Activated B cell treated with CpG ODN at 0.5 μM for 24 hours (primary cell): ENCODE measurements at regions of chr12 and their contacts with region 1.

Region 1: DNA sequence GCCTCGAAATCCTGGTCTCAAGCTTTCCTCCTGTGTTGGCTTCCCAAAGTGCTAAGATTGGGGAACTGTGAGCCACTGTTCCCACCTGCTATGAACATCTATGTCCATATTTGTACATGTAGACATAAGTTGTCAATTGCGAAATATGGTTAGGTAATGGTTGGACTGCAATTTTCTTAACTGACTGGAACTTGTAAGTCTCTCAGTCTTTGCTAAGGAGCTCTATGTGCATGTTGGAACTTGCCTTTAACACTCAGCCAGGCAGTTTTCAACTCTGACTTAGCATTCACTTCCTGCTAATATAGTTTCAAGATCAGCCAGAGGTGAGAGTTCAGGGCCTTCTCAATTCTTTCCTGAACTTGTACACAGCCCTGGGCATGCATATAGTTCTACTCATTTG is 44.5 kb upstream of the EEA1 start:
- DNase-seq: no peak
- ATAC-seq: no peak
- H3K4me3 Mint-ChIP-seq: no peak overlapping the region
- H3K27ac Mint-ChIP-seq: peak overlapping the region; percentile 62
- H3K4me1 Mint-ChIP-seq: peaks cover 58% of the 10 kb centered on the region
- H3K27me3 Mint-ChIP-seq: no peaks in the 10 kb centered on the region
- CTCF ChIP-seq: no peak

Region 2: GRCh38 chr12:91588874-91589454 is 1384.6 kb before region 1 on chr12:
- CTCF ChIA-PET with region 1: no interaction called
- POLR2A ChIA-PET with region 1: no interaction called
- intact Hi-C with region 1: no loop called
- DNase-seq: no peak
- ATAC-seq: no peak
- H3K4me3 Mint-ChIP-seq: no peak overlapping the region
- H3K27ac Mint-ChIP-seq: no peak overlapping the region
- H3K4me1 Mint-ChIP-seq: no peaks in the 10 kb centered on the region
- H3K27me3 Mint-ChIP-seq: peaks cover 2% of the 10 kb centered on the region
- CTCF ChIP-seq: no peak

Region 3: DNA sequence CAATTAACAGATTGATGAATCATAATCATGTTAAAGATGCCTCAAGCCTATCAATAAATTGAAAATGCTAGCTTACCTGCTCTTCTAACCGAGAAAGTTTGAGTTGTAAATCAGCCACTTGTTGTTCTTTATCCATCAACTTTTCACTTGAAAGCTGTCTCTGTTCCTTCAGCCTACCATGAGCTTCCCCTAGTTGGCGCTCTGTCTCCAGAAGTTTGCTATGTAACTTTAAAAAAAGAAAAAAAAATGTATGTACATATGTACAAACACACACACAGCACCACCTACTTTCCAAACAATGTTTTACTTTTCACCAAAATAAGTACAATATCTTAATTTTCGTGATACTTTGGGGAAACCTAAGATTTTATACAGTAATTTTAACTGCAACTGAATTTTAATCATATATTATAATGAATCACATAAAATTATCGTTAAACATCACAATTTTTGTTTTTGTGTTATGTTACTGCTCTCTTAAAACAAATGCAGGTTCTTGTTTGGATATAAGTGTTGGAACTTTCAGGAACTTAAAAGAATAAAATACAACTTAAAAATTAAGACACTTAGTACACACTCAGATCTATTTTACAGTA is 145.7 kb before region 1 on chr12:
- CTCF ChIA-PET with region 1: no interaction called
- POLR2A ChIA-PET with region 1: no interaction called
- intact Hi-C with region 1: loop called (anchors 5 kb)
- DNase-seq: no peak
- ATAC-seq: no peak
- H3K4me3 Mint-ChIP-seq: no peak overlapping the region
- H3K27ac Mint-ChIP-seq: no peak overlapping the region
- H3K4me1 Mint-ChIP-seq: no peaks in the 10 kb centered on the region
- H3K27me3 Mint-ChIP-seq: no peaks in the 10 kb centered on the region
- CTCF ChIP-seq: no peak

Region 4: GRCh38 chr12:92943482-92944250 is 29.9 kb before region 1 on chr12:
- CTCF ChIA-PET with region 1: interaction called, 3 read pairs
- POLR2A ChIA-PET with region 1: interaction called, 3 read pairs
- intact Hi-C with region 1: loop called (anchors 1 kb)
- DNase-seq: no peak
- ATAC-seq: no peak
- H3K4me3 Mint-ChIP-seq: no peak overlapping the region
- H3K27ac Mint-ChIP-seq: peak overlapping the region; percentile 46
- H3K4me1 Mint-ChIP-seq: peaks cover 36% of the 10 kb centered on the region
- H3K27me3 Mint-ChIP-seq: no peaks in the 10 kb centered on the region
- CTCF ChIP-seq: no peak